ENCODE measurements at regions of chr3 and their contacts with region 1.

Region 1: GRCh38 chr3:134464064-134464697 is 21.6 kb downstream of the ANAPC13 start:
- DNase-seq: peak; percentile 87 to 94 (median 91)
- H3K4me3 ChIP-seq: no peak overlapping the region
- H3K27ac ChIP-seq: peak overlapping the region in 1 of 2 donors; percentile 46
- H3K4me1 ChIP-seq: peaks cover 18% of the 10 kb centered on the region
- H3K27me3 ChIP-seq: no peaks in the 10 kb centered on the region
- CTCF ChIP-seq: no peak
- EP300 ChIP-seq: peak; percentile 40
- POLR2A ChIP-seq: no peak

Region 2: GRCh38 chr3:134364061-134364935 is 99.9 kb before region 1 on chr3:
- intact Hi-C with region 1: loop called in 1 of 4 experiments (anchors 10 kb)
- DNase-seq: peak; percentile 92 to 97 (median 94)
- H3K4me3 ChIP-seq: peak overlapping the region; percentile 26
- H3K27ac ChIP-seq: peak overlapping the region; percentile 51 to 72
- H3K4me1 ChIP-seq: peaks cover 28% of the 10 kb centered on the region
- H3K27me3 ChIP-seq: no peaks in the 10 kb centered on the region
- CTCF ChIP-seq: no peak
- EP300 ChIP-seq: no peak
- POLR2A ChIP-seq: no peak